ENCODE measurements at regions of chr2 and their contacts with region 1.

Region 1: DNA sequence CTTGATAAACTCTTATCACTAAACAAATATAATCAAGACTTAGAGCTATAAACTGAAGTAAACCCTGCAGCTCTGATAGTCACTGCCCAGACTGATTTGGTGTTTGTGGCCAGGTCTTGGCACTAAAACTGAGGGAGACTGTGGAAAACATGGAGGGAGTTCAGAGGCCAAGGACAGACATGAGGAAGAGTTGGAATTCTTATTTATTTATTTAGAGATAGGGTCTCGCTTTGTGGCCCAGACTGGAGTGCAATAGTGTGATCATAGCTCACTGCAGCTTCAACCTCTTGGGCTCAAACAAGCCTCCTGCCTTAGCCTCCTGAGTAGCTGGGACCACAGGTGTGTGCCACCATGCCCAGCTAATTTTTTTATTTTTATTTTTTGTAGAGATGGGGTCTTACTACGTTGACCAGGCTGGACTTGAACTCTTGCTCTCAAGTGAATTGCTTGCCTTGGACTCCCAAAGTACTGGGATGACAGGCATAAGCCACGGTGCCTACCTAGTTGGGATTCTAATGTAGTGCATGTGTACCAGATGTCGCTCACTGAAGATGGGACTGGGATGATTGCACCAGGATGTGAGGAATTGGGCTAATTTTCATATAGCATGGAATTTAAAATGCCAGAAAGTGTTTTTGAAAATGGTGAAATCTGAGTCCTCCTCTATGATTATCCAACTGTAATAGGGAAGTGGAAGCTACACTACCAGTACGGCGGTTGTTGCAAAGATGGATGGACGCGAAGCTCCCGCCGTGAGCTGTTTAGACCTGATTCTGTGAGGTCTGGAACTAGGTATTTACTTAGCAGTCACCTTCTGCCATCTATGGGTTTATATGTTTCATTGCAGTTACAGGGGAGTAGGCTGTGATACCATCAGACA is 52.7 kb upstream of the CTLA4 start:
- DNase-seq: peak; percentile 13 to 84 (median 50)
- ATAC-seq: peak; percentile 80
- H3K4me3 ChIP-seq: no peak overlapping the region
- H3K4me3 Mint-ChIP-seq: peak overlapping the region; percentile 79
- H3K27ac ChIP-seq: no peak overlapping the region
- H3K27ac Mint-ChIP-seq: no peak overlapping the region
- H3K4me1 ChIP-seq: peaks cover 23% of the 10 kb centered on the region
- H3K4me1 Mint-ChIP-seq: peaks cover 43% of the 10 kb centered on the region
- H3K27me3 ChIP-seq: no peaks in the 10 kb centered on the region
- H3K27me3 Mint-ChIP-seq: no peaks in the 10 kb centered on the region
- CTCF ChIP-seq: peak; percentile 79

Region 2: DNA sequence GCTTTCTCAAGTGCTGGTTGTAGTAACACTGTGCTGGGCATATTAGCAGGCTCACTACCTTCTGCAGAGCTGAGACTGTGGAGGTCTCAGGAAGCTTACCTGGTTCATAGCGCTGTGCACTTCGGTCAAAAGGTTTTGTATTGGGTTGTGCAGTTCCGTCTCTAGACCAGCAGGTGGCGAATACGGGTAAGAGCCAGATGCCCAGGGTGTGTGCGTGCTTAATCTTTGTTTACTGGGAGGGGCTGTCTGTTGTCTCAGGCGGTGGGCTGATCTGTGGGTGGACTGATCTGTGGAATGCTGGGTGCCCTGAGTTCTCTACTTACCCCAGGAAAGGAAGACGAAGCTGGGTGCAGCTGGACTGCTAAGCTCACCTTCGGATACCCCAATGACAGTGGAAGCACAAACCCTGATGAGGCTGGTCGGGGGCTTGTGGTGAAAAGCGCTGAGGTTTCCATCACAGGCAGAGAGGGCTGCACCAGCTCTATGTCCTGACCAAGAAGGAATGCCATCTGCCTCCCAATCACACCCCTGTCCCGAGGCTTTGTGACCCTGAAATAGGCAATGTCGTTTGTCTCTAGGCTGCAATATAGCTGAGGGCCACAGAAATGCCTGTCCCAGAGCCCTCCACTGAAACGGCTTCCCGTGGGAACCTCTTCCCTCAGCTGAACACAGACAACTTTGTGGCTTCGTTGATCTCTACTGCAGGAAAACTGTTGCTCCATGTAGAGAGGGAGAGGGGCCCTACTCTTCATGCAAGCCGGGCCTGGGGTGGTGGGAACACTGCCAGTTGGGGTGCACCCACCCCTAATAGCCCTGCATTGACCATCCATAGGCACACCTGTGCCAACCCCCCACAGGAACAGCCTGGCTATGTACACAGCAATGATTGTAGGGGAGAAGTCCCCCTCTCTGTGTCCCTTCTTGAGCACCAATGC is 1226.0 kb before region 1 on chr2:
- CTCF ChIA-PET with region 1: no interaction called
- POLR2A ChIA-PET with region 1: no interaction called
- intact Hi-C with region 1: loop called in 1 of 2 experiments (anchors 5 kb)
- DNase-seq: peak; percentile 41 to 87 (median 68)
- ATAC-seq: peak; percentile 99
- H3K4me3 ChIP-seq: no peak overlapping the region
- H3K4me3 Mint-ChIP-seq: no peak overlapping the region
- H3K27ac ChIP-seq: no peak overlapping the region
- H3K27ac Mint-ChIP-seq: no peak overlapping the region
- H3K4me1 ChIP-seq: peaks cover 4% of the 10 kb centered on the region
- H3K4me1 Mint-ChIP-seq: peaks cover 11% of the 10 kb centered on the region
- H3K27me3 ChIP-seq: no peaks in the 10 kb centered on the region
- H3K27me3 Mint-ChIP-seq: no peaks in the 10 kb centered on the region
- CTCF ChIP-seq: peak; percentile 80

Region 3: GRCh38 chr2:203453858-203454451 is 360.9 kb before region 1 on chr2:
- CTCF ChIA-PET with region 1: interaction called, 12 read pairs
- POLR2A ChIA-PET with region 1: no interaction called
- intact Hi-C with region 1: no loop called
- DNase-seq: peak in 3 of 9 experiments; percentile 16 to 65 (median 57)
- ATAC-seq: peak; percentile 51
- H3K4me3 ChIP-seq: no peak overlapping the region
- H3K4me3 Mint-ChIP-seq: no peak overlapping the region
- H3K27ac ChIP-seq: no peak overlapping the region
- H3K27ac Mint-ChIP-seq: no peak overlapping the region
- H3K4me1 ChIP-seq: no peaks in the 10 kb centered on the region
- H3K4me1 Mint-ChIP-seq: no peaks in the 10 kb centered on the region
- H3K27me3 ChIP-seq: no peaks in the 10 kb centered on the region
- H3K27me3 Mint-ChIP-seq: no peaks in the 10 kb centered on the region
- CTCF ChIP-seq: peak; percentile 67

Region 4: GRCh38 chr2:203706403-203706802 is 108.5 kb before region 1 on chr2 and contains the start of gene CD28:
- CTCF ChIA-PET with region 1: interaction called, 17 read pairs
- POLR2A ChIA-PET with region 1: interaction called, 5 read pairs
- intact Hi-C with region 1: loop called in 1 of 2 experiments (anchors 2 kb)
- DNase-seq: peak; percentile 79 to 97 (median 89)
- ATAC-seq: peak; percentile 81
- H3K4me3 ChIP-seq: peak within 1 kb of the TSS; percentile 63 to 64
- H3K4me3 Mint-ChIP-seq: peak within 1 kb of the TSS; percentile 93
- H3K27ac ChIP-seq: peak within 1 kb of the TSS; percentile 82 to 83
- H3K27ac Mint-ChIP-seq: peak within 1 kb of the TSS; percentile 97
- H3K4me1 ChIP-seq: peaks cover 45% of the 10 kb centered on the region
- H3K4me1 Mint-ChIP-seq: peaks cover 53% of the 10 kb centered on the region
- H3K27me3 ChIP-seq: peaks cover 0 to 2% of the 10 kb centered on the region in 2 experiments
- H3K27me3 Mint-ChIP-seq: no peaks in the 10 kb centered on the region
- CTCF ChIP-seq: no peak
- total RNA-seq, gene CD28: 78.4 to 80.7 TPM

Region 5: DNA sequence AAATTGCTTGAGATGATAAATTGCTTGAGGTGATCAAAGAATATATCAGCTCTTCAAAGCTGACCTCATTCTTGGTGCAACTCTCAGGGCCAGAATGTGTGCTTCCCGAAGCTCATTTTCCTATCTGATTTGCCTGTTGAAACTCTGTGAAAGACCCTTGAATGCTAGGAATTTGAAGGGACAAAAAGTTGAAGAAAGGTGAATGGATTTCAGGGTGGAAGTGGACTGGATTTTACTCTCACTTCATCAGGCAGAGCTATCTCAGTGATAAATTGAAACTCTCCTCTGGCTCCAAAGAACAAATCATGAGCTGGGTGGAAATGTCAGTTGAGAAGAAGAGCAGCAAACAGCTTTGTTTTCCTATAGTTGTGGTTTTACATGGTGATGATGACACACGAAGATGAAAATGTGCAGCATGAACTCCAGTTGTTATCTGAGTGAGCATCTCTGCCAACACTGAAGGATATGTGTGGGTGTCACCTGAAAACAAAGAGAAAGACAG is 74.1 kb before region 1 on chr2:
- CTCF ChIA-PET with region 1: interaction called, 7 read pairs
- POLR2A ChIA-PET with region 1: interaction called, 5 read pairs
- intact Hi-C with region 1: loop called in 1 of 2 experiments (anchors 1 kb)
- DNase-seq: peak in 6 of 9 experiments; percentile 22 to 89 (median 48)
- ATAC-seq: peak; percentile 83
- H3K4me3 ChIP-seq: no peak overlapping the region
- H3K4me3 Mint-ChIP-seq: peak overlapping the region; percentile 70
- H3K27ac ChIP-seq: peak overlapping the region; percentile 63 to 77
- H3K27ac Mint-ChIP-seq: peak overlapping the region; percentile 95
- H3K4me1 ChIP-seq: peaks cover 67% of the 10 kb centered on the region
- H3K4me1 Mint-ChIP-seq: peaks cover 82% of the 10 kb centered on the region
- H3K27me3 ChIP-seq: no peaks in the 10 kb centered on the region
- H3K27me3 Mint-ChIP-seq: no peaks in the 10 kb centered on the region
- CTCF ChIP-seq: no peak

Region 6: GRCh38 chr2:203909261-203909967 is 94.5 kb after region 1 on chr2:
- CTCF ChIA-PET with region 1: interaction called, 46 read pairs
- POLR2A ChIA-PET with region 1: no interaction called
- intact Hi-C with region 1: loop called (anchors 1 to 2 kb)
- DNase-seq: peak in 2 of 9 experiments; percentile 44 to 58
- ATAC-seq: peak; percentile 73
- H3K4me3 ChIP-seq: no peak overlapping the region
- H3K4me3 Mint-ChIP-seq: no peak overlapping the region
- H3K27ac ChIP-seq: no peak overlapping the region
- H3K27ac Mint-ChIP-seq: no peak overlapping the region
- H3K4me1 ChIP-seq: peaks cover 10% of the 10 kb centered on the region
- H3K4me1 Mint-ChIP-seq: peaks cover 5% of the 10 kb centered on the region
- H3K27me3 ChIP-seq: peaks cover 0 to 2% of the 10 kb centered on the region in 2 experiments
- H3K27me3 Mint-ChIP-seq: peaks cover 3% of the 10 kb centered on the region
- CTCF ChIP-seq: peak; percentile 90